ENCODE measurements at regions of chr10 and their contacts with region 1.

Region 1: DNA sequence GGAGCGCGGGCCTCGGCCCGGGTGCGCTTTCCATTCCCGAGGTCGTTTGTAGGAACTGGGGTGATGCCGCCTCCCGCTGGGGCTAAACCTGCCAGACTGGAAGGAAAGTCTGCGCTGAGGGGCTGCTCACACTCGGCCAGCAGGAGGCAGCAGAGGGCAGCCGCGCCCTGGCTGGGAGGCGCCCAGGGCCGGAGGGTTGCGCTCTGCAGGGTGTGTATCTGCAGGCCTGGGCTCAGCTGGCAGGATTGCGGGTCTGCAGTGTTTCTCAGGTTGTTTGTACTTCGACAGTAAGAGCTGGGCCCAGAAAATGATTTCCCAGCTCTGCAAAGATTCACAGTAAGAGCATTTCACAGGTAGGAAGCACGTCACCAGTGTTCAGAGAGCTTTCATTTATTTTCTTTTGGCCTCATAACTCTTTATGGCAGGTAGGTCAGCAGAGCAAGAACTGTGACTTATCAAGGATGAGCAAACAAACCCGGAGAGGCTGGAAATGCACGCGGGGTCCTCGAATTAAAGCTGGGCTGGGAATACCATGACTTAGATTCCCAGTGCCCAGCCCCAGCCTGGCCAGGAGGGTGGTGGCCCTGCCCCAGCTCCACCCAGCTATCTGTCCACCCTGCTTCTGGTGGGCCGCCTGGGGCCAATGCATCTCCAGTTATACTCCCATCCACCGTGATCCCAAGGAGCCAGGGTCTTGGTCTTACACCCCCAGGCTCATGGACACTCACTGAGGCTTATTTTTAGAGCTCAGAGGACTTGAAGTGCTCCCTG is 15.2 kb upstream of the PPP2R2D start:
- DNase-seq: peak; percentile 87
- CTCF ChIP-seq: peak; percentile 99

Region 2: GRCh38 chr10:131900350-131901146 is 15.0 kb after region 1 on chr10 and contains the start of gene PPP2R2D:
- CTCF ChIA-PET with region 1: interaction called, 22 read pairs
- POLR2A ChIA-PET with region 1: no interaction called
- DNase-seq: peak; percentile 98
- CTCF ChIP-seq: no peak

Region 3: GRCh38 chr10:131943021-131943814 is 57.6 kb after region 1 on chr10:
- CTCF ChIA-PET with region 1: interaction called, 20 read pairs
- POLR2A ChIA-PET with region 1: no interaction called
- DNase-seq: no peak
- CTCF ChIP-seq: peak; percentile 32

Region 4: DNA sequence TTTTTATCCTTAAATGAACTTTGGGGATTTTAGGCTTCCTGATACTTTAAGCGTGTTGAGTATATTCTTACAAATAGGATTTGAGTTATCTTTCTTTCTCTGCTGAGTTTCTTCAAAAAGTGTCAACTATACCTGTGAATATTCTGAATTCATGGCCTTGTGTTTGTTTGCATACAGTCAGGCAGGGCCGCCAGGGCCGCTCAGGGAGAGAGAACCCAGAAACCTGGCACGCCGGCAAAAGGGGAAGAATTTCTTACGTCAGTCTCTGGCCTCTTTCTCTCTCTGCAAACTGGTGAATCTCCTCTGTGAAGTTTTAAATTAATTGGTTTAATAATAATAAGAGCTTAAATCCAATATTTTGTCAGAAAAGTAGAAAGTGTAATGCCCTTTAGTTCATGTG is 125.4 kb after region 1 on chr10:
- CTCF ChIA-PET with region 1: interaction called, 10 read pairs
- POLR2A ChIA-PET with region 1: no interaction called
- DNase-seq: no peak
- CTCF ChIP-seq: no peak

Region 5: DNA sequence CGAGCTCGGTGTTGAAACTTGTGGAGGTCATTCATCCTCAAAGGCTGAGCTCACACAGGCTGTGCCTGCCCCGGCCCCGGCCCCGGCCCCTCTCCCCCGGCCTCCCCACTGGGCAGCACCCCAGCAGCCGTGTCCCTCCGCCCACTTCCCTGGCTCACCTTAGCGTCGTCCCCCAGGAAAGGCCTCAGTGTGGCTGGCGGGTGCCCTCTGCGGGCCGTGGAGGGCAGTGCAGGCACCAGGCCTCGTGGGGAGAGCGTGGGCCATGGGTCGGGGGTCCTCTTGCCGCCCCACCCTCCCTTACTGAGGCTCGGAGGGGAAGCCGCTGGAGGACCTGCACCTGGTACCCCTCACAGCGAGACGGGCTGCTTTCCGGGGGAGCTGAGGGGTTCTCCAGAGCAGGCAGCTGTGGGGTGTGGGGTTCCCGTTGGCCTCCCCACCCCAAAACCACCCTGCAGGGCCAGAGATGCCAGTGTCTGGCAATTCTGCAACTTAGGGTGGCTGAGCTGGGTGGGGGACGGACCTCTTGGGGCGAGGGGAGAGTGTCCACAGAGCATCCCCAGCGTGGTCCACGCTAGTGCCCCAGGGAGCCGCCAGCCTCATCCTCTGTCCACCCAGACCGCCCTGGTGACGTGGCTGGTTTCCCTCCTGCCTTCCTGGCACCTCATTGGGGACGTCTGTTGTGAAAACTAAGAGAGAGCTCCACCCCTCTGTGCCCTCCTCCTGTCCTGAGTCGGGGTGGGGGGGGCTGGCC is 257.0 kb after region 1 on chr10:
- CTCF ChIA-PET with region 1: interaction called, 10 read pairs
- POLR2A ChIA-PET with region 1: no interaction called
- DNase-seq: peak; percentile 83
- CTCF ChIP-seq: peak; percentile 87